Ascending aorta (tissue), 2 donors: ENCODE measurements at regions of chr5 and their contacts with region 1.

Region 1: GRCh38 chr5:171961117-171961516 is 45.3 kb downstream of the FBXW11 start:
- DNase-seq: no peak
- H3K4me3 ChIP-seq: no peak overlapping the region
- H3K27ac ChIP-seq: no peak overlapping the region
- H3K4me1 ChIP-seq: peaks cover 6 to 36% of the 10 kb centered on the region in 2 donors
- H3K27me3 ChIP-seq: no peaks in the 10 kb centered on the region
- CTCF ChIP-seq: no peak

Region 2: DNA sequence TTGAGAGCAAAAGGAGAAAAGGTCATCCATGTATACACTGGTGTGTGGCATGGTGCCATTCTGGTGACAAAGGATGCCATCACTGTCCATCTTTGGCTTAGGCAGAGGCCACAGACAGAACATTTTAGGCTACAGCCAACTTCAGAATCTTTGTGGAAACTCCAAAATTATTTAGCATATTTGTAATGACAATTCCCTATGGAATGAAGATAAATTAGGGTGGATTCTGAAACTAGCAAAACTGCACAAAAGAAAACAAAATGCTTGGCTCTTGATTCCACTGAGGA is 47.2 kb before region 1 on chr5:
- intact Hi-C with region 1: loop called (anchors 10 kb)
- DNase-seq: no peak
- H3K4me3 ChIP-seq: no peak overlapping the region
- H3K27ac ChIP-seq: no peak overlapping the region
- H3K4me1 ChIP-seq: peaks cover 0 to 20% of the 10 kb centered on the region in 2 donors
- H3K27me3 ChIP-seq: no peaks in the 10 kb centered on the region
- CTCF ChIP-seq: no peak